Activated CD4-positive, alpha-beta T cell treated with anti-CD3 and anti-CD28 coated beads for 36 hours (primary cell): ENCODE measurements at regions of chr14 and their contacts with region 1.

Region 1: DNA sequence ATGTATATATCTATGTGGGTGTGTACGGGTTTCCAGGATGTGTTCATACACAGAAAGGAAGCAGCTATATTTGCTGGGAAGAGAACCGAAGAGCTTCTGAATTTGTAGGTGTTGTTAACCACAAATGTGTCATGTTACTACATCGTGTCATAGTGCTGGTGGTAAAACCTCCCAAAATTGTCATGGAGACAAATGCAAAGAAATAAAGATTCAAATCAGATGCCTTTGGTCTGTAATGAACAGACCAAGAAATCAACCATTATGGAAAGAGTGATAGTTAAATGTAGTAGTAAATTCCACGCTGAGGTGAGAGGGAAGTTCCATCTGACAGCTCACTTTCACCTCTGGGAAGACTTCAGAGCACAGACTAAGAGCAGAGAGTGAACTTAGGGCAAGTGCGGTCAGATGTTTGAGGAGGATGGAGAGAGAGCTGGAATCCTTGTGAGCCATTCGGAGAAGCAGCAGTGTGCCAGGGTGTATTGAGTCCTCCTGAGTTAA is 487.5 kb downstream of the TMEM121 start:
- DNase-seq: peak; percentile 67
- ATAC-seq: peak; percentile 74
- H3K4me3 Mint-ChIP-seq: peak overlapping the region; percentile 50
- H3K27ac Mint-ChIP-seq: peak overlapping the region; percentile 98
- H3K4me1 Mint-ChIP-seq: peaks cover 89% of the 10 kb centered on the region
- H3K27me3 Mint-ChIP-seq: no peaks in the 10 kb centered on the region

Region 2: GRCh38 chr14:105439691-105440553 is 574.0 kb before region 1 on chr14:
- CTCF ChIA-PET with region 1: no interaction called
- POLR2A ChIA-PET with region 1: no interaction called
- intact Hi-C with region 1: no loop called
- DNase-seq: no peak
- ATAC-seq: no peak
- H3K4me3 Mint-ChIP-seq: no peak overlapping the region
- H3K27ac Mint-ChIP-seq: no peak overlapping the region
- H3K4me1 Mint-ChIP-seq: peaks cover 8% of the 10 kb centered on the region
- H3K27me3 Mint-ChIP-seq: no peaks in the 10 kb centered on the region

Region 3: DNA sequence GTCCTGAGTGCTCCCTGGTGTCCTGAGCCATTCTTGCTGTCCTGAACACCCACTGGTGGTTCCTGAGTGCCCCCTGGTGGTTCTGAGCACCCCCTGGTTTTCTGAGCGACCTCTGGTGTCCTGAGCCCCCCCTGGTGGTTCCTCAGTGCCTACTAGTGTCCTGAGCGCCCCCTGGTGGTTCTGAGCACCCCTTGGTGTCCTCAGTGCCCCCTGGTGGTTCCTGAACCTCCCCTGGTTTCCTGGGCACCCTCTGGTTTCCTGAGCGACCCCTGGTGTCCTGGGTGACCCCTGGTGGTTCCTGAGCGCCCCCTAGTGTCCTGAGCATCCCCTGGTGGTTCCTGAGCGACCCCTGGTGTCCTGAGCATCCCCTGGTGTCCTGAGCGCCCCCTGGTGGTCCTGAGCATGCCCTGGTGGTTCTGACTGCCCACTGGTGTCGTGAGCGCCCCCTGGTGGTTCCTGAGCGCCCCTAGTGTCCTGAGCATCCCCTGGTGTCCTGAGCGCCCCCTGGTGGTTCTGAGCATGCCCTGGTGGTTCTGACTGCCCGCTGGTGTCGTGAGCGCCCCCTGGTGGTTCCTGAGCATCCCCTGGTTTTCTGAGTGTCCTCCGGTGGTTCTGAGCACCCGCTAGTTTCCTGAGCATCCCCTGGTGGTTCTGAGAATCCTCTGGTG is 14.4 kb before region 1 on chr14:
- CTCF ChIA-PET with region 1: interaction called, 22 read pairs
- POLR2A ChIA-PET with region 1: interaction called, 7 read pairs
- intact Hi-C with region 1: loop called in 1 of 2 experiments (anchors 1 kb)
- DNase-seq: peak; percentile 98
- ATAC-seq: peak; percentile 85
- H3K4me3 Mint-ChIP-seq: peak overlapping the region; percentile 68
- H3K27ac Mint-ChIP-seq: peak overlapping the region; percentile 85
- H3K4me1 Mint-ChIP-seq: peaks cover 50% of the 10 kb centered on the region
- H3K27me3 Mint-ChIP-seq: no peaks in the 10 kb centered on the region

Region 4: GRCh38 chr14:106024983-106025604 is 11.2 kb after region 1 on chr14:
- CTCF ChIA-PET with region 1: interaction called, 13 read pairs
- POLR2A ChIA-PET with region 1: interaction called, 8 read pairs
- intact Hi-C with region 1: loop called (anchors 1 kb)
- DNase-seq: peak; percentile 68
- ATAC-seq: peak; percentile 45
- H3K4me3 Mint-ChIP-seq: no peak overlapping the region
- H3K27ac Mint-ChIP-seq: peak overlapping the region; percentile 66
- H3K4me1 Mint-ChIP-seq: peaks cover 66% of the 10 kb centered on the region
- H3K27me3 Mint-ChIP-seq: no peaks in the 10 kb centered on the region

Region 5: GRCh38 chr14:106039400-106039799 is 25.5 kb after region 1 on chr14:
- CTCF ChIA-PET with region 1: interaction called, 47 read pairs
- POLR2A ChIA-PET with region 1: no interaction called
- intact Hi-C with region 1: loop called in 1 of 2 experiments (anchors 2 kb)
- DNase-seq: peak; percentile 82
- ATAC-seq: peak; percentile 96
- H3K4me3 Mint-ChIP-seq: no peak overlapping the region
- H3K27ac Mint-ChIP-seq: no peak overlapping the region
- H3K4me1 Mint-ChIP-seq: peaks cover 13% of the 10 kb centered on the region
- H3K27me3 Mint-ChIP-seq: peaks cover 2% of the 10 kb centered on the region

Region 6: DNA sequence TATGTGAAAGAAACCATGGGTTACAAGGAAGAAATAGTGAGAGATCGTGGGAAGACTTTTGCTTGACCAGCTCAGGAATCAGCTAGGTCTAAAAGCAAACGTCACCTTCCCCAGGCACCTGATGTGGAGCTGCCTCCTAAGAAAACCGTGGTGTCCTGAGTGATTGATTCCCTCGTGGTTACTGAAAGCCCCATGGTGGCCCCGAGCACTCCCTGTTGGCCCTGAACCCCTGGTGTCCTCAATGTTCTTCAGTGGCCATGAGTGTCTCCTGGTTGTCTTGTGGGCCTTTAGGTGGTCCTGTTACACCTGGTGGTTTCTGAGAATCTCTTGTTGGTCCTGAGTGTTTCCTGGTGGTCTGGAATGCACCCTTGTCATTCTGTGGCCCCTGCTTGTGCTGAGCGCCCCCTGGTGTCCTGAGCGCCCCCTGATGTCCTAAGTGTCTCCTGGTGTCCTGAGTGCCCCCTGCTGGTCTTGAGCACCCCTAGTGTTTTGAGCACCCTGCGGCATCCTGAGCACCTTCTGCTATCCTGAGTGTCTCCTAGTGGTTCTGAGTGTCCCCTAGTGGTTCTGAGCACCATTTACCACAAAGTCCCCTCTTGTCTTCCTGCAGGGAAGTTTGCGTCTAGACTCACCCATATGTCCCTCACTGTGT is 31.1 kb after region 1 on chr14:
- CTCF ChIA-PET with region 1: interaction called, 47 read pairs
- POLR2A ChIA-PET with region 1: no interaction called
- intact Hi-C with region 1: loop called (anchors 2 to 5 kb)
- DNase-seq: peak; percentile 93
- ATAC-seq: peak; percentile 100
- H3K4me3 Mint-ChIP-seq: no peak overlapping the region
- H3K27ac Mint-ChIP-seq: peak overlapping the region; percentile 34
- H3K4me1 Mint-ChIP-seq: peaks cover 11% of the 10 kb centered on the region
- H3K27me3 Mint-ChIP-seq: no peaks in the 10 kb centered on the region

Region 7: DNA sequence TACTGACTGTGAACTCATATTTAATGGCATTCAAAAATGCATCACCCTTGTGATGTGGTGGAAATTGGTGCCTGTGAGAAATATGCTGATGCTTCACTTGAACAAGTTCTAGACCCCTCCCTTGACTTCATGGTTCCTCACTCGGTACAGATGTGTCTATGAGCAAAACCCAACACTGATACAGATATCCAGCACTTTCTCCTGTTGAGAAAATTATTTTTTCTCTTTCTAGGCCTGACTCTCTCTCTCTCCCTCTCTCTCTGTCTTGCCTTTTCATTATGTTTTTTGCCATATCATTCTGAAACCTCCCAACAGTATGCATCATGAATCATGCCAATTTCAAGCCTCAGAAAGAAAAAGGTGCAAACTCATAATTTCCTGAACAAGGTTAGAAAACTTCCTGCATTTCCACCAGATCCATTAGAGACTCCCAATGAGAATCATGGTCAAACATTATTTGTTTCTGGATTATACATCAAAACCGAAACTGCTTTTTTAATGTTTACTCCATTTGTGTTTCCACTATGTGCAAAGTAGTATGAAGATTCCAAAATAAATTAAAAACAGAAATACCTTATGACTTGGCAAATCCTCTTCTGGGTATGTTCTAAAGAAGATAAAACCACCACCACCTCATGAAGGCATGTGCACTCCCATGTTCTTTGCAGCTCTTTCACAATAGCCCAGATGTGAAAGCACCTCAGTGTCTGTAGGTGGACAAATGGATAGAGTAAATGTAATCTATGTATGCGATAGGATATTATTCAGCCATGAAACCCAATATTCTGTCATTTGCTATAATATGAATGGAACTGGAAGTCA is 56.1 kb after region 1 on chr14:
- CTCF ChIA-PET with region 1: no interaction called
- POLR2A ChIA-PET with region 1: no interaction called
- intact Hi-C with region 1: loop called (anchors 2 to 5 kb)
- DNase-seq: peak; percentile 31
- ATAC-seq: peak; percentile 75
- H3K4me3 Mint-ChIP-seq: no peak overlapping the region
- H3K27ac Mint-ChIP-seq: peak overlapping the region; percentile 52
- H3K4me1 Mint-ChIP-seq: peaks cover 21% of the 10 kb centered on the region
- H3K27me3 Mint-ChIP-seq: peaks cover 17% of the 10 kb centered on the region